HepG2 (cell line): ENCODE measurements at regions of chr1 and their contacts with region 1.

Region 1: DNA sequence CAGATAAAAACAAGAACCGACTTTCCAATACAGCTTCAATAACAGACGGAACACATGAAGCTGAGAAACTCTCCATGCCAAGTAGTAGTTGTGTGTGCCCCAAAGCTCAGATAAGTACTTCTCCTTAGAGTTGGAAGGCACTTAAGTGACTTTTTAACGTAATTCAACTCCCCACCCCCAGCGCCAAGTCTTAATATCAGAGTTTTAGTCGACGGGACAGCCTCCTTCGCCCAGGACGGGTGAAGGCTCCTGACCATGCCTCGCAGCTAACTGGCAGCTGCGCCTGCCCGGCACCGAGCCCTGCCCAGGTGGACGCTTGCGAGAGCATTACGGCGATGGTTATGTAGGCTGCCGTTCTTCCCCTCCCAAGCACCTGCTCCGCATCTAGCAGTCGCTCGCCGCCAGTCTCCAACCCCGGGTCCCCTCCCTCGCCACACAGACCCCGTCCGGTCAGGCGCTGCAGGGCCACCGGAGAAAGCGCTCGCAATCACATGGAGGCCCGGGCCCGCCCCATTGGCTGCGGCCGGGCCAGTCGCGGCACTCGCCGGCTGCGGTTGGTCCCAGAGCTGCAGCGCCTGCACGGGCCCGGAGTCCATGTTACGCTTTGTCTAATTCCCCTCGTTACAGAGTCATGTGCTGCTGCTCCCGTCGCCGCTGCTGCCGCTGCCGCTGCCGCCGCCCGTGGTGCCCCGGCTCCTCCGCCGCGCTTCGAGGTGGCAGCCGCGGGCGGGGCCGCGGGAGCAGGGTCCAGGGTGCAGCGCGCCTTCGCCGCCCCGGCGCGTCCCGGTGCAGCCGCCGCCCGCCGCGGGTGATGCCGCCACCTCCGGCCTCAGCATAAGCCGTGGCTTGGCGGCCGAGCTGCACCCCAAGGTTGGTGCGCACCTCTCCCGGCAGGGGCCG is at the start of gene LRRC8D:
- DNase-seq: peak; percentile 79
- ATAC-seq: peak; percentile 96
- H3K4me3 ChIP-seq: peak within 1 kb of the TSS; percentile 84 to 89 (median 86)
- H3K27ac ChIP-seq: peak within 1 kb of the TSS; percentile 97
- H3K4me1 ChIP-seq: peaks cover 56% of the 10 kb centered on the region
- H3K27me3 ChIP-seq: no peaks in the 10 kb centered on the region; a peak in 1 of 5 replicates
- CTCF ChIP-seq: peak; percentile 24; the same call in 1 of the 2 replicates
- EP300 ChIP-seq: no peak
- POLR2A ChIP-seq: peak; percentile 63 to 75
- RAD21 ChIP-seq: peak; percentile 8; the same call in 1 of the 2 replicates
- total RNA-seq, gene LRRC8D: 44.6 and 45.5 TPM in 2 replicates

Region 2: DNA sequence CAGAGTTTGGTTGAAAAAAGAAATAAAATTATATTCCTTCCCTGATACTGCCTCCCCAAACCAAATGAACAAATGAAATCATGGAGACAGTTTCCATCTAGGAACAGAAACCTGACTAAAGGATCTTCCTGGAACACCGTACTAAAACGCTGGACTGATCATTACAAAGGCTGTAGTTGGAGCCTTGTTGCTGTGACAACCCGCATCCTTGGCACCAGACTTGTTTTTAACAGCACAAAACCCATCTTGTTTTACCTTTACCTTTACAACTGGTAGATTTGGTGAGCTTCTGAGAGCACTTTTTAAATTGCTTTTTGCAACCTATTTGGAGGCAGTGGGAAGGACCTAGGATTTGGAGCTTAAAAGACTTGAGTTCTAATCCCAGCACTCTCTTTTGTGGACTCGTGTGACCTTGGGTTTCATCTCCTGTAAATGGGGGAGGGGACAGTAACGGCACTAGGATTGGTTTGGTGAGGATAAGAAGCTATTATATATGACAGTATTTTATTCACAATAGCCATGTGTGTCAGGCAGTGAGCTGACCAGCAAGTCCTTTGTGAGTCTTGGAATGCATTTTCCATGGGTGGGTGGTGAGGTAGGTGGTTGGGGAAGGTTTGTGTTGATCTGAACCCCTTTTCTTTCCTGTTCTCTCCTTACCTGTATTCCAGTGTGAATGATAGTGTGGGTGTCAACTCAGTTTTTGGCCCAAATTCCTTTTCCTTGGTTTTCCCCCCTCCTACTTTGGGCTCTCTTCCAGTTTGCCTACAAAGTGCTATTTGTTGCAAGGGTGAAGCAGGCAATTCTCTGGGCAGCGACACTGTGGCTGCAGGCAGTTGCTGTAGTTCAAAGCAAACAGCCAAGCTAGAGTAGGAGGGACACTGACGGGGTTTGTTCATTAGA is 12.8 kb after region 1 on chr1:
- CTCF ChIA-PET with region 1: no interaction called
- POLR2A ChIA-PET with region 1: interaction called, 115 read pairs
- in situ Hi-C with region 1: no loop called
- intact Hi-C with region 1: loop called (anchors 1 kb)
- DNase-seq: peak; percentile 54
- ATAC-seq: no peak
- H3K4me3 ChIP-seq: no peak overlapping the region
- H3K27ac ChIP-seq: peak overlapping the region; percentile 97
- H3K4me1 ChIP-seq: peaks cover 92% of the 10 kb centered on the region
- H3K27me3 ChIP-seq: no peaks in the 10 kb centered on the region
- CTCF ChIP-seq: no peak
- EP300 ChIP-seq: no peak; a peak in 1 of 4 replicates
- POLR2A ChIP-seq: no peak
- RAD21 ChIP-seq: no peak

Region 3: GRCh38 chr1:89873770-89874169 is 53.1 kb after region 1 on chr1:
- CTCF ChIA-PET with region 1: no interaction called
- POLR2A ChIA-PET with region 1: no interaction called
- in situ Hi-C with region 1: no loop called
- intact Hi-C with region 1: loop called (anchors 5 kb)
- DNase-seq: no peak
- ATAC-seq: no peak
- H3K4me3 ChIP-seq: no peak overlapping the region
- H3K27ac ChIP-seq: peak overlapping the region; percentile 24
- H3K4me1 ChIP-seq: peaks cover 36% of the 10 kb centered on the region
- H3K27me3 ChIP-seq: no peaks in the 10 kb centered on the region
- CTCF ChIP-seq: no peak
- EP300 ChIP-seq: no peak
- POLR2A ChIP-seq: no peak
- RAD21 ChIP-seq: no peak

Region 4: GRCh38 chr1:89942825-89943688 is 122.4 kb after region 1 on chr1:
- CTCF ChIA-PET with region 1: no interaction called
- POLR2A ChIA-PET with region 1: interaction called, 11 read pairs
- in situ Hi-C with region 1: no loop called
- intact Hi-C with region 1: loop called (anchors 2 kb)
- DNase-seq: peak; percentile 96
- ATAC-seq: peak; percentile 87
- H3K4me3 ChIP-seq: peak overlapping the region in 1 of 3 experiments; percentile 17; a peak in 1 of 6 replicates
- H3K27ac ChIP-seq: peak overlapping the region; percentile 80
- H3K4me1 ChIP-seq: peaks cover 74% of the 10 kb centered on the region
- H3K27me3 ChIP-seq: no peaks in the 10 kb centered on the region
- CTCF ChIP-seq: no peak
- EP300 ChIP-seq: peak in 1 of 2 experiments; percentile 43; a peak in 2 of 4 replicates
- POLR2A ChIP-seq: no peak
- RAD21 ChIP-seq: no peak

Region 5: DNA sequence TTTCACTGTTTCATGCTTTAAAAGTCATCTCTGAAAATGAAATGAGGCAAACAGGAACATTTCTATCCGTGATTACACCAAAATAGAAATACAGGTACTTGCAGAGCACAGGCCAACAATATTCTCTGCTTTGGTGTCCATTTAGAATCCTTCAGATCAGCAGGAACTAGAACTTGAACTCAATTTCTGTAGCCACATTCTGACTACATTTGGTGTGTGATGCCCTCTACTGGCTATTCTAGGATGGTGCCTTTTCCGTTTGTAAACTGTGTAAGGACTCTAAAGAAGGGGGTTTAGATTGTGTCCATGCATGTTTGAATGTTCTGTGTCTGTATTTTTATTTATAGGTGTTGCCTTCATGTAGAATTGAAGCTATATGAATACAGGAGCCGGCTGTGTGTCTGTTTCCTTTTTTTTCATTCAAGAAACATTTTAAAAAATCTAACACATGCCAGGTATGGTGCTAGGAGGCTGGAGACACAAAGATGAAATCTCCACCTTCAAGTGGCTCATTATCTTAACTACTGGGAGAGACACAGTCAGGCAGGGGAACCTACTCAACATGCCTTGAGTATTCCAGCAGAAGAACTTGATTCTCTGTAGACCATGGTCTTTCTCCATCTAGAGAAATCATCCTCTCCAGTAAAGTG is 166.6 kb after region 1 on chr1:
- CTCF ChIA-PET with region 1: no interaction called
- POLR2A ChIA-PET with region 1: interaction called, 6 read pairs
- in situ Hi-C with region 1: no loop called
- intact Hi-C with region 1: loop called (anchors 1 kb)
- DNase-seq: peak; percentile 62
- ATAC-seq: peak; percentile 72
- H3K4me3 ChIP-seq: no peak overlapping the region
- H3K27ac ChIP-seq: no peak overlapping the region
- H3K4me1 ChIP-seq: peaks cover 36% of the 10 kb centered on the region
- H3K27me3 ChIP-seq: no peaks in the 10 kb centered on the region
- CTCF ChIP-seq: peak; percentile 87
- EP300 ChIP-seq: no peak
- POLR2A ChIP-seq: no peak
- RAD21 ChIP-seq: peak; percentile 77